ENCODE measurements at regions of chr1 and their contacts with region 1.

Region 1: GRCh38 chr1:65309304-65310077 is at the start of gene DNAJC6:
- DNase-seq: peak; percentile 69
- H3K4me3 Mint-ChIP-seq: peak within 1 kb of the TSS; percentile 82
- H3K27ac Mint-ChIP-seq: no peak within 1 kb of the TSS
- H3K4me1 Mint-ChIP-seq: no peaks in the 10 kb centered on the region
- H3K27me3 Mint-ChIP-seq: no peaks in the 10 kb centered on the region
- CTCF ChIP-seq: no peak
- total RNA-seq, gene DNAJC6: 7.9 and 8.4 TPM in 2 replicates

Region 2: DNA sequence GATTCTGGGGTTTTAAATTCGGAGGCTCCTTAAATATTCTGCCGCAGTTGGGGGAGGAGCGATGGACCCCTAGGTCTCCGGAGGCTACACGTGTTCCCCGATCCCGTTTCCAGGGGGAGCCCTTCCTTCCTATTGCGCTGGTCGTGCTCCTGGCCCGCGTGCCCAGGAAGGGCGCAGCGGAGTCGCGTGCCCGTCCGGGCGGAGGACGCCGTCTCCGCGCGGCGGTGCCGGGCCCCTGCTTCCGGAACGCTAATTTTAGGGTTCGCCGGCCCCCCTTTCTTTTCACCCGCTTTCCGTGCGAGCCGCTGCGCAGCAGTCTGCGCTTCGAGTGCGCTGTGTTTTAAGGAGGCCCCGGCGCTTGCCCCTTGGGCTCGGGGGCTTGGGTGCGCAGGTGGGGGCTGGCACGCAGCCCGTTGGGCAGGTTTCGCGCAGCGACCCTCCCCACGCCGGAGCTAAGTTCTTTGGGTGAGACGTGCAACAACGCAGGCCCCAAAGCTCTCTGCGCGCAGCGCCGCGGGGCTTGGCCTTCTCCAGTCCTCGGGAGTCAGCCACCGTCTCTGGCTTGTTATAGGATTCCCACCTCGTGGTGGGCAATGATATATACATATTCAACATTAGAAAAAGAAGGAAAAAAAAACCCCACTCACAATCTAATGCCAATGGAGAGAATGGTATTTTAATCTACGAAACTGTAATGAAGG is 43.7 kb before region 1 on chr1:
- CTCF ChIA-PET with region 1: interaction called, 4 read pairs
- POLR2A ChIA-PET with region 1: interaction called, 3 read pairs
- intact Hi-C with region 1: loop called (anchors 5 kb)
- DNase-seq: peak; percentile 42
- H3K4me3 Mint-ChIP-seq: peak overlapping the region; percentile 60
- H3K27ac Mint-ChIP-seq: no peak overlapping the region
- H3K4me1 Mint-ChIP-seq: peaks cover 9% of the 10 kb centered on the region
- H3K27me3 Mint-ChIP-seq: no peaks in the 10 kb centered on the region
- CTCF ChIP-seq: no peak

Measured in MCF 10A (cell line).